Caco-2 (cell line): ENCODE measurements at regions of chr7 and their contacts with region 1.

Region 1: DNA sequence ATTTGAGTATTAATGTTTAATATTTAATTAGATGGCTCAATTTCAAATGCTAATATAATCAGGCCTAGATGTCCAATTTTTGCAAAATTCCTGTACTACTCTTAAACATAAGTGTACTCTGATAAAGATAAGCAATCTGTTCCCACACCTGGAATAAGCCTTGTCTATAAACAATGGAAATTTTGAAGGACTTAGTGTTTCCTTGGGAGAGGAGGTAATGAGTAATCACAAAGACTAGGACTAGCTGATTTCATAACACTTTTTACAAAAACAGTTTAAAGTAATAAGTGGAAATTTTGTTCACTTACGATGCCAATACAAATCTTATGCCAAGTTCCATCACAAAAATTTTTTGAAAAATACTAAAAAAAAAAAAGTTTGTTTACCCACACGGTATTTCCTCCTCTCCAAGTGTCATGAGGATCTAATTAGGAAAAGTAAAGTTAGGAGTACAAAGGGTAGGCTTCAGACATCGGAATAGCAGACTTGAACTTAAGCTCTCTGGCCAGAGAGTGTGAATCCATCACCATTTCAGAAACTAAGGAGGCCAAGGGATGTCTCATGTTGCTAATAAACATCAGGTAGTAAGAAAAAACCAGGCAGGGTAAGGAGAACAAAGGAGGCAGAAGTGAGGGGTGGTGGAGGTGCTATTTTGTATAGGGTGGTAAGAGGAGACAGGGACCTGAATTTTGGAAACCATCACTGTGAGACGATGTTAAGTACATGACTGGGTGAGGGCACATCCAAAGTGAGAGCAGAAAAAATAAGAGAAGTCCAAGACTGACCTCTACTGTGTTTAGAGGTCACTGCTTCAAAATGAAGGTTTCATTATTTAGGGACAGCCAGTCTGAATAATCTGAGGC is 61.3 kb downstream of the RAPGEF5 start:
- DNase-seq: no peak
- H3K4me3 ChIP-seq: no peak overlapping the region
- H3K4me3 Mint-ChIP-seq: no peak overlapping the region
- H3K27ac Mint-ChIP-seq: no peak overlapping the region
- H3K4me1 ChIP-seq: no peaks in the 10 kb centered on the region
- H3K4me1 Mint-ChIP-seq: no peaks in the 10 kb centered on the region
- H3K27me3 ChIP-seq: no peaks in the 10 kb centered on the region
- H3K27me3 Mint-ChIP-seq: no peaks in the 10 kb centered on the region
- CTCF ChIP-seq: no peak

Region 2: GRCh38 chr7:22488643-22489462 is 193.2 kb after region 1 on chr7:
- CTCF ChIA-PET with region 1: no interaction called
- POLR2A ChIA-PET with region 1: no interaction called
- intact Hi-C with region 1: loop called (anchors 1 kb)
- DNase-seq: peak; percentile 67 to 80
- H3K4me3 ChIP-seq: no peak overlapping the region
- H3K4me3 Mint-ChIP-seq: no peak overlapping the region
- H3K27ac Mint-ChIP-seq: no peak overlapping the region
- H3K4me1 ChIP-seq: no peaks in the 10 kb centered on the region
- H3K4me1 Mint-ChIP-seq: no peaks in the 10 kb centered on the region
- H3K27me3 ChIP-seq: no peaks in the 10 kb centered on the region
- H3K27me3 Mint-ChIP-seq: no peaks in the 10 kb centered on the region
- CTCF ChIP-seq: peak; percentile 81 to 88